Activated CD4-positive, alpha-beta T cell treated with anti-CD3 and anti-CD28 coated beads, Interleukin-2, amount 10 ng/mL, durations not matched to agents 24 days and 14 days (primary cell): ENCODE measurements at regions of chr12 and their contacts with region 1.

Region 1: GRCh38 chr12:7108796-7109571 is at the start of gene C1RL:
- DNase-seq: peak; percentile 96
- H3K4me3 Mint-ChIP-seq: peak within 1 kb of the TSS; percentile 95
- H3K27ac Mint-ChIP-seq: peak within 1 kb of the TSS; percentile 92
- H3K4me1 Mint-ChIP-seq: peaks cover 42% of the 10 kb centered on the region
- H3K27me3 Mint-ChIP-seq: no peaks in the 10 kb centered on the region
- total RNA-seq, gene C1RL: 19.8 and 23.0 TPM in 2 replicates

Region 2: DNA sequence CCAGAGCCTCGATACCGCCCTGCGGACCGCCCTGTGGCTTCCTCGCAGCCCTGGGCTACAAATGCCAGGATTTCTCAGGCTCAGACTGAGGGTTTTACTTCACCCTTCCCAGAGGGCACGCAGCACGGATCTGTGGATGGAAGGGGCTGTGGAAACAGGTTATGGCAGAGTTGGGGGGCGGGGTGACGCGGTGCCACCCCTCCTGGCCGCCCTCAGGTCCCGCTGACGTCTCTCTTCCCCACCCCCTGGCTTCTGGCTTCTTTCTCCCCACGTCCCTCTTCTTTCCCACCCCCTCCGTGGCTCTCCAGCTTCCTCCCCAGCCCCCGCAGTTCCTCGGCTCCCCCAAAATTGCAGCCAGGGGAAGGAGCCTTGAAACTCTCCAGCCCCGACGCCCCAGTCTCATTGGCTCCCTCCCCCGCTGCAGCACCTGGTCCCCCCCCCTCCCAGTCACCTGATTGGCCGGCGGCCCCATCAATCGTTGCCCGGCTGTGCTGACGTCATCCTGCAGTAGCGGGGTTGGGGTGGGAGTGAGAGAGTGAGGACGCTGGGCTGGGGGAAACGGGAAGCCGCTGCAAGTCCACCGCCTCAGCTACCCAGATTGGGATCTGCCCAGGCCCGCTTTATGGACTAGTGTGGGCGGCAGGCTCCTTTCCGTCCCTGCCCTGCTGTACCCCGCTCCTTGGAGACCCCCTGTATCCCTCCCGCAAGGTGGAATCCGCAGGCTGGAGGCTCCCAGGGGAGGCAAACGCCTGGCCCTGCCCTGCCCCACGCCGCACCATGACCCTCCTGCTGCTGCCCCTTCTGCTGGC is 21.1 kb after region 1 on chr12 and contains the start of gene CLSTN3:
- intact Hi-C with region 1: loop called (anchors 1 kb)
- DNase-seq: peak; percentile 95
- H3K4me3 Mint-ChIP-seq: peak within 1 kb of the TSS; percentile 98
- H3K27ac Mint-ChIP-seq: peak within 1 kb of the TSS; percentile 89
- H3K4me1 Mint-ChIP-seq: peaks cover 44% of the 10 kb centered on the region
- H3K27me3 Mint-ChIP-seq: no peaks in the 10 kb centered on the region
- total RNA-seq, gene CLSTN3: 42.1 and 47.0 TPM in 2 replicates